ENCODE measurements at regions of chr5 and their contacts with region 1.

Region 1: GRCh38 chr5:134511788-134512650 is 13.5 kb upstream of the JADE2 start:
- DNase-seq: peak; percentile 73
- H3K4me3 ChIP-seq: peak overlapping the region; percentile 43; the same call in 1 of the 2 replicates
- H3K27ac ChIP-seq: peak overlapping the region; percentile 92
- H3K4me1 ChIP-seq: peaks cover 64% of the 10 kb centered on the region
- H3K27me3 ChIP-seq: no peaks in the 10 kb centered on the region
- CTCF ChIP-seq: peak; percentile 67

Region 2: DNA sequence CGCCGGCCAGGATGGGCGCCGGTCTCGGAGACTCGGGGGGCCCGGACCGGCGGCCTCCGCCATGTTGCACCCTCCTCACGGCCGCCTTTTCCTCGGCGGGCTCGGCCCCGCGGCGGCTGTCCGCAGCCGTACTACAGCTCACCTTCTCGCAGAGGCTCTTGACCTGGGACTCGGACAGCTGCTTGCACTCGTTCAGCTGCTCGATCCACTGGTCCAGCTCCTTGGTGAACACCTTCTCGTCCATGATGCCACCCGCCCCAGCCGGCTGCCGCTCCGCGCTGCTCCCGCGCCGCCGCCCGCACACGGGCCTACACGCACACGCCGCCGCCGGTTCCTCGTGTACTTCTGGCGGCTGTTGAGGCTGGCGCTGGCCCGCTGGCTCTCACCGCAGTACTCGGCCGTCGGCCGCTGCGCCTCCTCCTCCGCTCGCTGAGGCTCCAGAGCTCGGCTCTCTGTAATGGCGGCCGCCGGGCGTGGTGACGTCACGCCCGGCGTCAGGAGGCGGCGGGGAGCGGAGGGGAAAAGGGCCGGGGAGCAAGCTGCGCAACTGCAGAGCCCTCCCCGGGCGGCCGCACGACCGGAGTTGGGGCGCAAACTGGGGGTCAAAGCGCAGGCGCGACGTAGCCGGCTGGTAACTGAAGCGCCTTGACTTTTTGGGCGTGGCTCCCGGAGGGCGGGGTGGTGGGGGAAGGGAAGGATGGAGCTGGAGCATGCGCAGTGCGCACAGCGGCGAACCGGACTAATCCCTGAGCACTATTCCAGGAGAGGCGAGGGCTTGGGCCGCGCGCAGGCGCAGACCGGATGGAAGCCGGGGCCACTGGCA is 286.2 kb before region 1 on chr5 and contains the start of gene PPP2CA:
- CTCF ChIA-PET with region 1: no interaction called
- POLR2A ChIA-PET with region 1: no interaction called
- intact Hi-C with region 1: no loop called
- DNase-seq: peak; percentile 92 to 100
- H3K4me3 ChIP-seq: peak within 1 kb of the TSS; percentile 79
- H3K27ac ChIP-seq: peak within 1 kb of the TSS; percentile 95
- H3K4me1 ChIP-seq: peaks cover 36% of the 10 kb centered on the region
- H3K27me3 ChIP-seq: no peaks in the 10 kb centered on the region
- CTCF ChIP-seq: peak; percentile 38; the same call in 1 of the 2 replicates
- total RNA-seq, gene PPP2CA: 146 and 149 TPM in 2 replicates

Region 3: GRCh38 chr5:134304311-134304710 is 207.7 kb before region 1 on chr5:
- CTCF ChIA-PET with region 1: no interaction called
- POLR2A ChIA-PET with region 1: no interaction called
- intact Hi-C with region 1: loop called (anchors 2 kb)
- DNase-seq: no peak
- H3K4me3 ChIP-seq: no peak overlapping the region
- H3K27ac ChIP-seq: no peak overlapping the region
- H3K4me1 ChIP-seq: no peaks in the 10 kb centered on the region
- H3K27me3 ChIP-seq: no peaks in the 10 kb centered on the region
- CTCF ChIP-seq: no peak

Region 4: GRCh38 chr5:134411546-134412266 is 100.3 kb before region 1 on chr5 and contains the start of gene CDKN2AIPNL:
- CTCF ChIA-PET with region 1: interaction called, 3 read pairs
- POLR2A ChIA-PET with region 1: interaction called, 4 read pairs
- intact Hi-C with region 1: loop called (anchors 1 kb)
- DNase-seq: peak; percentile 65 to 89
- H3K4me3 ChIP-seq: peak within 1 kb of the TSS; percentile 98
- H3K27ac ChIP-seq: no peak within 1 kb of the TSS
- H3K4me1 ChIP-seq: peaks cover 16% of the 10 kb centered on the region
- H3K27me3 ChIP-seq: no peaks in the 10 kb centered on the region
- CTCF ChIP-seq: peak; percentile 60
- total RNA-seq, gene CDKN2AIPNL: 35.3 and 36.1 TPM in 2 replicates

Region 5: DNA sequence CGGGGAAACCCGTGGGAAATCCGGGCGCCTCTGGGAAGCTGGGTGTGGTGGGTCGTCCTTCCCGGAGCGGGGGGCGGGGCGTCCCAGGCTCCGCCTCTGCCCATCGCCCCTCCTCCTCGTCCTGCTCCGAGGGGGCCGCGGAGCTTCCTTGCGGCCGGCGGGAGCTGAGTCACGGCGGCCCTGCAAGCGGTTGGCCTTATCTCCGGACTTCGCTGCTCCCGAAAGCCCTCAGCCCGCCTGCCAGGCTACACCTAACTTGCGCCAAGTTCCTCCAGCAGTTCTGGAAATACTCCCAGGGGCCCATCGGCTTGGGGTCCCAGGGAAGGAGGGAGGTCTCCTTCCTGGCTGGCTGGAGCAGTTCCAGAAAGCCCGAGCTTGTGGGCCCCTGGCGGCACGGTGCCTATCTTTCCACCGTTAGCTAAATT is 46.2 kb before region 1 on chr5:
- CTCF ChIA-PET with region 1: interaction called, 6 read pairs
- POLR2A ChIA-PET with region 1: interaction called, 10 read pairs
- intact Hi-C with region 1: loop called (anchors 1 kb)
- DNase-seq: peak; percentile 77 to 90
- H3K4me3 ChIP-seq: peak overlapping the region; percentile 58
- H3K27ac ChIP-seq: peak overlapping the region; percentile 85
- H3K4me1 ChIP-seq: peaks cover 25% of the 10 kb centered on the region
- H3K27me3 ChIP-seq: no peaks in the 10 kb centered on the region
- CTCF ChIP-seq: no peak

Region 6: DNA sequence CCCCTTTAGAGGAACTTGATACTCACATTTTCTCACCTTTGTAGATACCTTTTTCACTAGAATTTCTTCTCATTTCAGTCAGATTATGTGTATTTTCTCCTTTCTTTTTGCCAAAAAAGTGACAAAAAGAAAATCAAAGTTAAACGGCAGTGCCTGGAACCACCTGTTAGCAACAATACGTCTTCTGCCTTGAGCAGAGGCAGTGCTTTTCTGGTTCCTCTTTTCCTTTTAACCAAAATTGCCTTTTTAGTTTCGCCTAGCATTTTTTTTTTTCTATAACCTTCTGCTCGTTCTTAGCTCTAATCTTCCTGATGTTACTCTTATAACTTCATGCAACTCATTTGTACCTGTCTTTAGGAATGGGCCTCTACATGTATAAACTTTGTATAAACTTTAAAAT is 1654.9 kb after region 1 on chr5:
- CTCF ChIA-PET with region 1: no interaction called
- POLR2A ChIA-PET with region 1: no interaction called
- intact Hi-C with region 1: no loop called
- DNase-seq: no peak
- H3K4me3 ChIP-seq: no peak overlapping the region
- H3K27ac ChIP-seq: no peak overlapping the region
- H3K4me1 ChIP-seq: no peaks in the 10 kb centered on the region
- H3K27me3 ChIP-seq: no peaks in the 10 kb centered on the region
- CTCF ChIP-seq: no peak